Left ventricle myocardium superior (tissue), 1 donor: ENCODE measurements at regions of chr5 and their contacts with region 1.

Region 1: DNA sequence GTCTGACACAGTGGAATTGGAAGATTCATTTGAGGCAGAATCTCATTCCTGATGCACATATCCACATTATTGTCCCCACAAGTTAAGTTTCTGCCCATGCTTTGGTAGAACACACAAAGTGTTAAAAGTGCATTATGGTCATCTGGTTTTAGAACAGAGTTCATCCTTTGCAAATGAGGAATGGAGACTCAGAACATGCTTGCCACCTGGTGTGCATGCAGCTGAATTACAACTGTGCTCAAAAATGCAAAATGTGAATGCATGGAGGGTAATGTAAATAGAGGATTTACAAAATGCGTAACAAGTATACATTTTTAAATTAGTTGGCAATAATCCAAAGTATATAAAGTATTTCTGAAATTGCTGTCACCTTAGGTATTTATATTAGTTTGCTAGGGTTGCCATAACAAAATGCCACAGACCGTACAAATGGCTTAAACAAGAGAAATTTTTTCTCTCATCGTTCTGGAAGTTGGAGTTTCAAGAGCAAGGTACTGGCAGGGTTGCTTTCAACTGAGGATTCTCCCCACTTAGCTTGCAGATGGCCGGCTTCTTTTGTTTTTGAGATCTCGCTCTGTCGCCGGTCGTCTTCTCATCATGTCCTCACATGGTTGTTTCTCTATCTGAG is 671.2 kb downstream of the TAF11L14 start:
- DNase-seq: no peak
- ATAC-seq: no peak

Region 2: GRCh38 chr5:17216176-17216973 is 1089.0 kb before region 1 on chr5:
- intact Hi-C with region 1: loop called (anchors 10 kb)
- DNase-seq: peak; percentile 67
- ATAC-seq: peak; percentile 70

Region 3: DNA sequence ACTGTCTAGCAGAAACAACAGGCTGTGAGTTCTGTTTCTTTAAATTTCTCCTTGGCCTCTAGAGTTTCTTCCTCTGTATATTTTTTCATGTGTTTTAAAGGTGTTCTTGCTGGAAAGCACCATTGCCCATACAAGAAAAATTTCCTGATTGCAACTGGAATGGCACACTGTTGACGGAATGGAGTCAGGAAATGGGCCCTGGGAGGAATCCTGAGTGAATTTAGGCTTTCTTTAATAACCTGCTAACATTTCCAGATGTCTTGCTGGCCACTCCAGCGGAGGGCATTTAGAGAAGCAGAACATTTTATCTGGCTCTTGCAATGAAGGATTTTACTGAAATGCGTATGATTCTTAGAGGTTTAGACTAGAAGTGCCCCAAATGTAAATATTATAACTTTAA is 65.1 kb after region 1 on chr5:
- intact Hi-C with region 1: loop called (anchors 2 kb)
- DNase-seq: no peak
- ATAC-seq: no peak

Region 4: GRCh38 chr5:18404039-18404438 is 98.6 kb after region 1 on chr5:
- intact Hi-C with region 1: no loop called
- DNase-seq: no peak
- ATAC-seq: no peak